GM12878 (cell line): ENCODE measurements at regions of chr1 and their contacts with region 1.

Region 1: DNA sequence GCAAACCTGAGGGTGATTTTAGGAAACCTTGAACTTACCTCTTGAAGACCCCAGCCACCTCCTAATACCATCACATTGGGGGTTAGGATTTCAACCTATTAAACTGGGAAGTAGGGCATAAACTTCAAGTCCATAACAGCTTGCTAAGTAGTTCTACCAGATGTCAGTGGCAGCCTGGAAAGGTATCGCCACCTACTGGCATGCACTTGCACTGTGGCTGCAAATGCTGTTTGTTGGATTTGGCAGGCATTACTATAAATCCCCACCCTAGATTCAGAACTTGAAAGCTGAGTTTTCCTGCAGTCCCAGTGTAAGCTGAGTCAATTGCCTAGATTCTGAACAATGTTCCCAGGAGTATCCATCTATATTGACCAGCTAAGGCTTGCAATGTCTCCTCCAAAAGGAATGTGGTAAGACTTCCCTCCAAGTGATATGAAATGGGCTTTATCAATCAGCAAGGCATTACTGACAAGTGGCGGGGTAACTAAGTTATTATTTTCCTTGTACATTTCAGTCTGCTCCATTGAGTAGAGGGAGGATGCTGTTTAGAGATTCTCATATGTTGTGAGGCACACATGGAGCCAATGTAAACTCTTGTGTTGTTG is 474.5 kb downstream of the PTPRC start:
- DNase-seq: peak; percentile 43
- ATAC-seq: peak; percentile 92
- H3K4me3 ChIP-seq: no peak overlapping the region
- H3K27ac ChIP-seq: no peak overlapping the region
- H3K4me1 ChIP-seq: no peaks in the 10 kb centered on the region
- H3K27me3 ChIP-seq: no peaks in the 10 kb centered on the region
- CTCF ChIP-seq: peak; percentile 58 to 87 (median 77)
- EP300 ChIP-seq: no peak
- POLR2A ChIP-seq: no peak
- RAD21 ChIP-seq: peak; percentile 91

Region 2: DNA sequence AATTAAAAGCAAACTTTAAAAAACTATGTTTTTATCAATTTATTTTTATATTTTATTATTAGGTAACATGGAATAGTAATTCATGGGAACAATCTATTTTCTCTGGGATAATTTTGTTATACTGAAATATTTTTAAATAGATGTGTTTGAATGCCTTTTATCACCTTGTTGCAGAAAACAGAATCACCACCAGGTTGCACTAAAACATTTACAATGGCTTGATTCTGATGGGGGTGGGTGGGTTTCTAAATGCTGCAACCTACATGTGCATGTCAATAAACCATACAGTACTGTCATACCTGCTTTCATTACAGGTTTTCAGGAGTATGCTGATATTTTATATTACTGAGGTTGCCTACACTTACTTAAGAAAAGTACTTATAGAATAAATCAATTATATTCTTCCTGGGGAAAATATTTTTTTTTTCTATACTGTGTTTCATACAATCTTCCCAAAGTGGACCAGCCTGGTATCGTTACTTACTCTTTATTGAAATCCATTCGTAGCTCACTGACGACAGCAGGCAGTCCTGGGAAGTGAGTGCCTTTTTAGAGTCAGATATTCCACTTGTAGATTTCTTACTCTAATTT is 341.7 kb before region 1 on chr1:
- CTCF ChIA-PET with region 1: interaction called, 9 read pairs
- POLR2A ChIA-PET with region 1: no interaction called
- RAD21 ChIA-PET with region 1: interaction called, 5 read pairs
- SMC1A ChIA-PET with region 1: interaction called, 12 read pairs
- in situ Hi-C with region 1: no loop called
- intact Hi-C with region 1: loop called (anchors 1 kb)
- DNase-seq: peak; percentile 20
- ATAC-seq: peak; percentile 70
- H3K4me3 ChIP-seq: no peak overlapping the region
- H3K27ac ChIP-seq: no peak overlapping the region
- H3K4me1 ChIP-seq: no peaks in the 10 kb centered on the region
- H3K27me3 ChIP-seq: no peaks in the 10 kb centered on the region
- CTCF ChIP-seq: peak; percentile 35 to 61 (median 41); a peak in 5 of 6 replicates
- EP300 ChIP-seq: no peak
- POLR2A ChIP-seq: no peak
- RAD21 ChIP-seq: peak; percentile 98

Region 3: DNA sequence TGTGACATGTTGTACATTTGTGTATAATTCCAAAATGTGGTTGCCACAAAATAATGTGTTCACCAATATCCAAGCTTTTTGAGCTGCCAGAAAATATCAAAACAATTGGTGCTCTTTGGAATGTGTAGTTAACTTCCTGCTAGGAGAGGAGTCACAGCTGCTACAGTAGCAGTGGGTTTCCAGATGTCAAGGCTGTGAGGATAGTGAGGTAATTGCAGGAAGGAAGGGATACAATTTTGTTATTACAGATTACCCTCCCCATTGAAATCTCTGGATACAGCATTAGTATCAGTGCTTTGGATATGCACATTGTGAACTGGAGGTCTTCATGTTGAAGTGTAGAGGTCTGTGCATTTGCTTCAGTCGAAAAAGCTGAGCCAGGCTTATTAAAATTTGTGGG is 221.3 kb before region 1 on chr1:
- CTCF ChIA-PET with region 1: interaction called, 24 read pairs
- POLR2A ChIA-PET with region 1: no interaction called
- RAD21 ChIA-PET with region 1: interaction called, 7 read pairs
- SMC1A ChIA-PET with region 1: interaction called, 14 read pairs
- in situ Hi-C with region 1: no loop called
- intact Hi-C with region 1: no loop called
- DNase-seq: no peak
- ATAC-seq: no peak
- H3K4me3 ChIP-seq: no peak overlapping the region
- H3K27ac ChIP-seq: no peak overlapping the region
- H3K4me1 ChIP-seq: no peaks in the 10 kb centered on the region
- H3K27me3 ChIP-seq: no peaks in the 10 kb centered on the region
- CTCF ChIP-seq: no peak
- EP300 ChIP-seq: no peak
- POLR2A ChIP-seq: no peak
- RAD21 ChIP-seq: no peak

Region 4: DNA sequence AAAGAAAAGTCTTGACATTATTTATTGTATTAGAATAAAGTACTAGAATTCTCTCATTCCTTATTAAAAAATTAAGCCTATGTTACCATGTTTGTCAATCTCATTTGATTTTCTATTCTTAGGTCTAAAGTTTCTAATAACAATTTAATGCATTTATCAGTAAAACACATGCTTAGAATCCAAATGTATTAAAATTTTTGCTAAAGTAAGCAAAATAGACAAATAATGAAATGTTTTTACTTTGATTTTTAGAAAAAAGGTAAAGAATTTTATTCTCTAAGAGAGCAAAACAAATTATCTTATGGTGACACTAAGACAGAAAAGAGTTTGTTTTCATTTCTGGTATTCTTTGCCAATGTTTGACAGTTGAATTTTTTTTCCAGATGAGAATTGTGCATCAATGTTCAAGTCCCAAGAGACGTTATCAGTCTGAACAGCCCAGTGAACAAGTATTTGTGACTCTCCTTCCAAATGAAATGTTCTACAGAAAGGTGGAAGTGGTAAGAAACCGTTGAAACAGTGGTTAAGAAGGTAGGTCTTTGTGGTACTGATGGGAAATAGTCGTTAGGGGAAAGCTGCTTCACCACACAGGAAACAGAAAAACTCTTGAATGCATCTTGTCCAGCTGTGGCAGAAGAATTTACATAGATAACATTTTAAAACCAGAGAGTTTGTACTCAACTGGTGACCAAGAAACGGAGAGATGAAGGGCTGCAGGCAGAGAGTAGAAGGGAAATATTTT is 72.0 kb before region 1 on chr1:
- CTCF ChIA-PET with region 1: no interaction called
- POLR2A ChIA-PET with region 1: interaction called, 3 read pairs
- RAD21 ChIA-PET with region 1: interaction called, 5 read pairs
- SMC1A ChIA-PET with region 1: interaction called, 6 read pairs
- in situ Hi-C with region 1: no loop called
- intact Hi-C with region 1: loop called (anchors 5 kb)
- DNase-seq: peak; percentile 94
- ATAC-seq: peak; percentile 96
- H3K4me3 ChIP-seq: no peak overlapping the region
- H3K27ac ChIP-seq: no peak overlapping the region
- H3K4me1 ChIP-seq: peaks cover 5% of the 10 kb centered on the region; the same call in 1 of the 2 replicates
- H3K27me3 ChIP-seq: no peaks in the 10 kb centered on the region
- CTCF ChIP-seq: no peak
- EP300 ChIP-seq: peak; percentile 85 to 93
- POLR2A ChIP-seq: no peak
- RAD21 ChIP-seq: no peak

Region 5: DNA sequence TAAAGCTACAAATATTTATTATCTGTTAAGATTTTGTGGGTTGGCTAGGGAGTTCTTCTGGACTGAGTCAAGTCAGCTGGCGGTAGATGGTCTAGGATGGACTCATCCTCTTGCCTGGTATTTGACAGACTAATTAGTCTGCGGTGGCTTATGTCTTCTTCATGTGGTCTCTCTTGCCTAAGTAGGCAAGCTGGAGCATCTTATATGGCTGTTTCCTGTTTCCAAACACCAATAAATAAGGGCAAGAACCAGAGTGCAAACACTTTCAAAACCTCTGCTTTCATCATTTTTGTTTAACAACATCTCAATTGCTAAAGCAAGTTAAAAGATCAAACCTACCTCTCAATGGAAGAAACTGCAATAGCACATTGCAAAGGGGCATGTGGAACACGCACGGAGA is 10.2 kb after region 1 on chr1:
- CTCF ChIA-PET with region 1: interaction called, 21 read pairs
- POLR2A ChIA-PET with region 1: no interaction called
- RAD21 ChIA-PET with region 1: no interaction called
- SMC1A ChIA-PET with region 1: interaction called, 19 read pairs
- in situ Hi-C with region 1: no loop called
- intact Hi-C with region 1: no loop called
- DNase-seq: no peak
- ATAC-seq: no peak
- H3K4me3 ChIP-seq: no peak overlapping the region
- H3K27ac ChIP-seq: no peak overlapping the region
- H3K4me1 ChIP-seq: no peaks in the 10 kb centered on the region
- H3K27me3 ChIP-seq: no peaks in the 10 kb centered on the region
- CTCF ChIP-seq: no peak
- EP300 ChIP-seq: no peak
- POLR2A ChIP-seq: no peak
- RAD21 ChIP-seq: no peak

Region 6: GRCh38 chr1:199463521-199464128 is 350.3 kb after region 1 on chr1:
- CTCF ChIA-PET with region 1: interaction called, 8 read pairs
- POLR2A ChIA-PET with region 1: no interaction called
- RAD21 ChIA-PET with region 1: interaction called, 4 read pairs
- SMC1A ChIA-PET with region 1: interaction called, 3 read pairs
- in situ Hi-C with region 1: no loop called
- intact Hi-C with region 1: loop called (anchors 10 kb)
- DNase-seq: peak; percentile 24
- ATAC-seq: peak; percentile 98
- H3K4me3 ChIP-seq: no peak overlapping the region
- H3K27ac ChIP-seq: no peak overlapping the region
- H3K4me1 ChIP-seq: no peaks in the 10 kb centered on the region
- H3K27me3 ChIP-seq: no peaks in the 10 kb centered on the region
- CTCF ChIP-seq: peak; percentile 55 to 67 (median 57)
- EP300 ChIP-seq: no peak
- POLR2A ChIP-seq: no peak
- RAD21 ChIP-seq: peak; percentile 86